ENCODE measurements at regions of chr17 and their contacts with region 1.

Region 1: GRCh38 chr17:36148559-36149295 is 27.7 kb downstream of the TBC1D3B start:
- DNase-seq: peak; percentile 74
- H3K4me3 ChIP-seq: no peak overlapping the region
- H3K27ac ChIP-seq: no peak overlapping the region
- H3K4me1 ChIP-seq: peaks cover 0 to 12% (median 3%) of the 10 kb centered on the region in 4 donors
- H3K27me3 ChIP-seq: peaks cover 7% of the 10 kb centered on the region
- CTCF ChIP-seq: peak; percentile 95 to 100 (median 100)
- EP300 ChIP-seq: no peak
- POLR2A ChIP-seq: no peak

Region 2: DNA sequence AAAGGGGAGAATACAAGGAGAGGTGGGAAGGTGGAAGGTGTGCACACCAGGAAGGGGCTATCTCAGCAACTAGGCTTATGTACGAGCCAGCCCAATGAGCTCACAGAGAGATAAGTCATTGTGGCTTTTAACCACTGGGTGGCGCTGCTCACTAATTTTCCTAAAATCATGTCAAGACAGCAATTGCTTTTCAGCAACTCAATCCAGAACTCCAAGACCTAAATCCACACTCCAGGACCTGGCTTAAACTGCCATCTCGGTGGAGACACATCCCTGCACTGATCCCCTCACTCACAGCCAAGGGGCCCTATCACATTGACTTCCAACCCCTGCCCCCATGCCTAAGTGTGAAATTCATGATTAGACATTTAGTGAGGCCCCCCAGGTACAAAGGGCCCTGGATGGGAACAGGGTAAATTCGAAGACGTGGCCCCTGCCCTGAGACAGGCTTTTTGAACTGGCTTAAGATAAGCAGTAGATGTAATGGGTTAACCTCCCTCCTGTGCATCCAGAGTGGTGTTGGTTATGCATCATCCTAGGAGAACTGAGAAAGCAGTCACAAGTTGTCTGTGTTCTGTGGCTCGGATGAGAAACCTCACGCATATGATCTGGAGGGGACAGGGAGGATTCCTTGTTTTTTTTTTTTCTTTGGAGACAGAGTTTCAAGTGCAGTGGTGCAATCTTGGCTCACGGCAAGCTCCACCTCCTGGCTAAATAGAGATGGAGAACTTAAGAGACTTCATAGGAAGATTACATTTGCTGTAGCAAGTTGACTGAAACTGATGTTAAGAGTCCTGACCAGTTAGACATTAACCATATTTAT is 179.0 kb before region 1 on chr17:
- in situ Hi-C with region 1: loop called (anchors 5 to 10 kb)
- intact Hi-C with region 1: no loop called
- DNase-seq: peak; percentile 87
- H3K4me3 ChIP-seq: no peak overlapping the region
- H3K27ac ChIP-seq: peak overlapping the region in 1 of 4 donors; percentile 44
- H3K4me1 ChIP-seq: peaks cover 0 to 22% (median 16%) of the 10 kb centered on the region in 4 donors
- H3K27me3 ChIP-seq: no peaks in the 10 kb centered on the region
- CTCF ChIP-seq: peak; percentile 71 to 90 (median 81)
- EP300 ChIP-seq: no peak
- POLR2A ChIP-seq: no peak

Region 3: GRCh38 chr17:35981908-35982330 is 166.8 kb before region 1 on chr17:
- in situ Hi-C with region 1: loop called in 2 of 4 experiments (anchors 10 kb)
- intact Hi-C with region 1: loop called (anchors 10 kb)
- DNase-seq: peak; percentile 28
- H3K4me3 ChIP-seq: no peak overlapping the region
- H3K27ac ChIP-seq: no peak overlapping the region
- H3K4me1 ChIP-seq: peaks cover 0 to 4% (median 0%) of the 10 kb centered on the region in 4 donors
- H3K27me3 ChIP-seq: no peaks in the 10 kb centered on the region
- CTCF ChIP-seq: peak in 3 of 5 experiments; percentile 6 to 23 (median 16)
- EP300 ChIP-seq: no peak
- POLR2A ChIP-seq: no peak